ENCODE measurements at regions of chr11 and their contacts with region 1.

Region 1: DNA sequence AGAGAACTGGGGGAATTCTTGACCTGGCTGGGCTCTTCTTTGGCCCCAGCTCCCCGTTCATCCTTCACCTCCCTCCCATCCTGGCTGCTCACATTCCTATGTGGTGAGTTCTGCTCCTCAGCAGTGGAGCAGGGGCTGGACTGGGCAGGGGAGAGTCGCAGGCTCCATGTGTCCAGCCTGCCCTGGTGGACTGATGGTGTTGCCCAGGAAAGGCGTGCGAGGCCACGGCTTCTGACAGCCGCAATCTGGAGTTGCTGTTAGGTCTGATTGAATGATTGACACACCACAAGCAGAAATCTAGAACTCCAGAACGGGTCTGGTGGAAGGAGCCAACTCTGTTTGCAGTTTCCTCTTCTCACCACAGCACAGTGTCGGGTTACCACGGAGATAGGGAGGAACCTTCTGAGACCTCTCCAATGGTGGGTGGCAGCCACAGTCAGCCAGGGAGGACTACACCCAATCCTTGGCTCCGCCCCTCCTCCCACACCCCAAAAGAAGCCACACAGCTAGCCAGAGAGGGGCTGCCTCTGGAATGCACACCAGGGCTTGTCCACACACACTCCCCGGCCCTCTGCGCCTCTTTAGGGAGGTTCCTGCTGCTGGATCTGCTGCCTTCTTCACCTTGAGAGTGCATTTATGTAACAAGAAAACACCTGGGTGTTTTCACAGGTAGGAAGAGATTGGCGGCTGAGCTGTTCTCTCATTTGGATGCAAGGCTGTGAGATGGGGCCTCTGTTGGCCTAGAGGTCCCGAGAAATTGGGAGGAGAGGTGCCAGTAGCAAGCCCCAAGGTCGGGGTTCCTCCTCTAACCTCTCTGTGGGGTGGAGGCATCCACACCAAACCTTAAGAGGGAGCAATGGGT is 56.4 kb upstream of the CD44 start:
- DNase-seq: peak; percentile 63 to 93 (median 85)
- ATAC-seq: peak; percentile 83 to 86 (median 84)
- H3K4me3 ChIP-seq: peak overlapping the region; percentile 40 to 62
- H3K4me3 Mint-ChIP-seq: peak overlapping the region; percentile 65 to 81 (median 67)
- H3K27ac ChIP-seq: peak overlapping the region; percentile 95
- H3K27ac Mint-ChIP-seq: peak overlapping the region; percentile 97 to 98
- H3K4me1 ChIP-seq: peaks cover 58 to 77% of the 10 kb centered on the region in 2 experiments
- H3K4me1 Mint-ChIP-seq: peaks cover 92 to 98% (median 94%) of the 10 kb centered on the region in 3 donors
- H3K27me3 ChIP-seq: no peaks in the 10 kb centered on the region
- H3K27me3 Mint-ChIP-seq: no peaks in the 10 kb centered on the region

Region 2: GRCh38 chr11:34417202-34417601 is 665.4 kb before region 1 on chr11:
- CTCF ChIA-PET with region 1: no interaction called
- POLR2A ChIA-PET with region 1: no interaction called
- DNase-seq: no peak
- ATAC-seq: no peak
- H3K4me3 ChIP-seq: no peak overlapping the region
- H3K4me3 Mint-ChIP-seq: no peak overlapping the region
- H3K27ac ChIP-seq: no peak overlapping the region
- H3K27ac Mint-ChIP-seq: no peak overlapping the region
- H3K4me1 ChIP-seq: no peaks in the 10 kb centered on the region
- H3K4me1 Mint-ChIP-seq: peaks cover 0 to under 1% (median 0%) of the 10 kb centered on the region in 3 donors
- H3K27me3 ChIP-seq: no peaks in the 10 kb centered on the region
- H3K27me3 Mint-ChIP-seq: peaks cover 18 to 27% of the 10 kb centered on the region in 2 donors

Region 3: GRCh38 chr11:35013514-35014233 is 68.9 kb before region 1 on chr11:
- CTCF ChIA-PET with region 1: no interaction called
- POLR2A ChIA-PET with region 1: interaction called in 1 of 2 experiments, 18 read pairs
- DNase-seq: peak in 19 of 35 experiments; percentile 5 to 75 (median 32)
- ATAC-seq: peak; percentile 38 to 64 (median 47)
- H3K4me3 ChIP-seq: no peak overlapping the region
- H3K4me3 Mint-ChIP-seq: peak overlapping the region; percentile 21 to 62 (median 22)
- H3K27ac ChIP-seq: peak overlapping the region; percentile 90
- H3K27ac Mint-ChIP-seq: peak overlapping the region; percentile 85 to 86
- H3K4me1 ChIP-seq: peaks cover 13 to 23% of the 10 kb centered on the region in 2 experiments
- H3K4me1 Mint-ChIP-seq: peaks cover 23 to 38% (median 32%) of the 10 kb centered on the region in 3 donors
- H3K27me3 ChIP-seq: no peaks in the 10 kb centered on the region
- H3K27me3 Mint-ChIP-seq: no peaks in the 10 kb centered on the region

Region 4: DNA sequence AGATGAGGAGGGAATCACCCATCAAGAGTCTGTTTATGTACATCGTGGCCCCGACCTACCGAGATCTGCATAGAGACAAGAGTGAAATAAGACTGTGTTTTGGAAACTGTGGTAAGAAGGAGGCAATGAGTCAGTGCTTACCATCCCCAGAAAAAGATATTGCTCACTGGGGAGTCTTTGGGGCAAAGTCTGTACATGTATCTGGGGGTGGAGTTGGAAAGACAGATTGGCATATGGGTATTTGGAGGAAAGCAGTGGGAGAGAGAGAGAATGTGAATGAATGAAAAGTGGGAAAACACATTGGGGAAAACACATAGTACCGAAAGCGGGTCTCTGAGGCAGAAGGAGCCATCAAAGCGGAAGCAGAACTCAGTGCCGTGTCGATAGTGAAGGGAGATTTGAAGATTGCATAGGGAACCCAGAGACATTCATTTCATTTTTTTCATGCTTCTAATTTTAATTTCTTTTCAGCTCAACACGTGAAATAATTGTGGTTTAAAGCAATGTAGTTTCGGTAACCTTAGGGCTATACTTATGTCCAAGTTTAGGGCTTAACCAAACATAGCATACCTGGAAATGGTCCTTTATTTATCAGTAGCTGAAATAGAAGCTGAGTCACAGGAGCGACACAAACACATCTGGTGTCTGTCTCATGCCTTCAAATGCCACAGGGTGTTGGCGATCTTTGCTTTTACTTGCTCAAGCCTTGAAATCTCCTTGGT is 42.2 kb before region 1 on chr11:
- CTCF ChIA-PET with region 1: interaction called in 1 of 2 experiments, 7 read pairs
- POLR2A ChIA-PET with region 1: interaction called, 3 to 11 read pairs
- DNase-seq: peak in 33 of 35 experiments; percentile 36 to 85 (median 50)
- ATAC-seq: peak; percentile 86 to 89 (median 88)
- H3K4me3 ChIP-seq: peak overlapping the region; percentile 51 to 53
- H3K4me3 Mint-ChIP-seq: peak overlapping the region; percentile 78 to 86 (median 80)
- H3K27ac ChIP-seq: peak overlapping the region; percentile 97
- H3K27ac Mint-ChIP-seq: peak overlapping the region; percentile 95 to 99
- H3K4me1 ChIP-seq: peaks cover 27 to 58% of the 10 kb centered on the region in 2 experiments
- H3K4me1 Mint-ChIP-seq: peaks cover 54 to 82% (median 69%) of the 10 kb centered on the region in 3 donors
- H3K27me3 ChIP-seq: no peaks in the 10 kb centered on the region
- H3K27me3 Mint-ChIP-seq: no peaks in the 10 kb centered on the region

Region 5: DNA sequence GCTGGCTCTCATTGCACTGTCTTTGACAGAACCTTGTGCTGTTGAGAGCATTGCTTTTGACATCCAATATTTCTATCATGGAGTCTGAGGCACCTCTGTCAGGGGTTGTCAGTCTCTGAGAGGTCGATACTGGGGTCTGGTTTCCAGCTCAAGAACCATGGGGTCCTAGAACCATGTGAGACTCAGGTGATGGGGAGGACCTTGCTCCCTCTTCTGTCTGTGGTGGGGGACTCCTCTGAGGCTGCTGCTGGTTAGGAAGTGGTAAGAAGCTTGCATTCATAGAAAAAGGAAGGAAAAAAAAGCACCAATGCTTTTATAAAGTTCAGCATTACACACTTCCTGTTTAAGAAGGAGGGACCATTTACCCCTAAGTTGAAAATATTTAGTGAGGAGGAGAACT is 35.4 kb before region 1 on chr11:
- CTCF ChIA-PET with region 1: interaction called, 3 to 7 read pairs
- POLR2A ChIA-PET with region 1: interaction called in 1 of 2 experiments, 16 read pairs
- DNase-seq: peak in 34 of 35 experiments; percentile 29 to 86 (median 58)
- ATAC-seq: peak; percentile 67 to 72 (median 70)
- H3K4me3 ChIP-seq: no peak overlapping the region
- H3K4me3 Mint-ChIP-seq: peak overlapping the region; percentile 1 to 77 (median 42)
- H3K27ac ChIP-seq: peak overlapping the region; percentile 98
- H3K27ac Mint-ChIP-seq: peak overlapping the region; percentile 93 to 95
- H3K4me1 ChIP-seq: peaks cover 59 to 85% of the 10 kb centered on the region in 2 experiments
- H3K4me1 Mint-ChIP-seq: peaks cover 95 to 97% (median 97%) of the 10 kb centered on the region in 3 donors
- H3K27me3 ChIP-seq: no peaks in the 10 kb centered on the region
- H3K27me3 Mint-ChIP-seq: no peaks in the 10 kb centered on the region

Measured in T-cell (primary cell).